GM13977 (cell line): ENCODE measurements at regions of chr1 and their contacts with region 1.

Region 1: DNA sequence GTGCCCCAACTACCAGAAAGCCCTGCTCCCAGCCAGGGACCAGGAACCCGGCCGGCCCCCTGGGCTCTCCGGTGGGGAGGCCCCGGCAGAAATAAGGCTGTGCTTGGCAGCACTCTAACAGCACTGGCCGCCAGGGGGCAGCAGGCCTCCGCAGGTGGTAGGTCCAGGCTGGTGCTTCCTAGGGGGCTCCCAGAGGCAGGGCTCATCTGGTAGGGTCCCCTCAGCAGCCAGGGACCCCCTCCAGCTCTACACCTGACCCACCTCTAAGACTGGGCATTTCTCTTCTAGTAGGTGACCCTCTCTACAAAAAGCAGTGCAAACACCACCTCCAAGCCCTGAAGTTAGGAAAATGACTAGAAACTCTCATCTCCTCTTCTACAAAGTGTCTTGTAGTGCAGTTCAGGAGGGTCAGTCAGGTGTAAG is 85.6 kb downstream of the STUM start:
- DNase-seq: peak; percentile 84
- CTCF ChIP-seq: peak; percentile 99

Region 2: DNA sequence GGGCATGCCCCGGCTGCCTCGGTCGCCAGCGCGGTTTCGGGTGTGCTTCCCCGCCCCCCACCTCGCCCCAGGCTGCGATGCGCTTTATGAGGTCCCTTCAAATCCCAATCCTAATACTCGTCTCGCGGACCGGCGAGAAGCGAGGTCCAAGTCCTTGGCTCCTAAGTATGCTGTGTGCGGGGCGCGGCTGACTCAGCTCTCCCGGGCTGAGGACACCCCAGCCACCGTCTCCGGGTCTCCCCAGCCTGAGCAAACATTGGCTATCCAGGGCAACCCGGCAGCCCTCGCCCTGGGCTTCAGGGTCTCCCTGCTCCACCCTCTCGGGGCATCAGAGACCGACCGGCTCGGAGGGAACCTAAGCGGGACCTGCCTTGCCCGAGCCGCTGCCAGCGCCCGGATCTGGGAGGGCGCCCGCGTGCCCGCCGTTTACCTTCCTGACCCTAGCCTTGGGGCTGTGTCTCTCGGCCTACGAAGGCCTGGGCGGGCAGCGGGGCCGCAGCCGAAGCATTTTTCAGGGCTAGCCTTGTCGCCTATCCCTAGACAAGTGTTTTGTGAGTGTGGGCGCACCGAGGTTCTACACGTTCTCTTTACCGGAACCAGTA is 103.7 kb after region 1 on chr1:
- in situ Hi-C with region 1: no loop called
- DNase-seq: no peak
- CTCF ChIP-seq: no peak

Region 3: DNA sequence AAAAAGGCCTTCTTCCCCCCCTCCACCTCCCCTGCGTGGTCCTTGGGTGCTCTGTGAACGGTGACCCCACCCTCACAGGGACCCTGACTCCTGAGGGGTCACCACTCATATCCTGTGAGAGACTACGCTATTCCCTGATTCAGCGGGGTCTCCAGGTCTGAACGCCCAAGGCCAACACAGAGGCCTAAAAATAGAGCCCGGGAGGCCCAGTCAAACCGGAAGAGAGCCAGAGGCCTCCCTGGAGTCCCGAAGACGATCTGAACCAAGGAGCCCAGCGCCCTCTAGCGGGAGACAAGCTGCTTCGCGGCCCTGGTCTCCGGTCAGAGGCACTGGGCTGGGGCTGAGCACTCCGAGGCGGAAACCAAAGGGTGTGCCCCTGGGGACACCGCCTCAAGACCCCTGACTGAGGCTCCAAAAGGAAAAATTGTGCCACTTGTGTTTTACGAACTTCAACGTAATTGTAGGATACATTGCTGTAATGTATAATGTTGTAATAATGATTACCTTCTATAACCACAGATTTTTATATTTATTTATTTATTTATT is 193.9 kb after region 1 on chr1:
- in situ Hi-C with region 1: loop called (anchors 5 kb)
- DNase-seq: peak; percentile 87
- CTCF ChIP-seq: peak; percentile 91